Naive thymus-derived CD8-positive, alpha-beta T cell (primary cell): ENCODE measurements at regions of chr16 and their contacts with region 1.

Region 1: DNA sequence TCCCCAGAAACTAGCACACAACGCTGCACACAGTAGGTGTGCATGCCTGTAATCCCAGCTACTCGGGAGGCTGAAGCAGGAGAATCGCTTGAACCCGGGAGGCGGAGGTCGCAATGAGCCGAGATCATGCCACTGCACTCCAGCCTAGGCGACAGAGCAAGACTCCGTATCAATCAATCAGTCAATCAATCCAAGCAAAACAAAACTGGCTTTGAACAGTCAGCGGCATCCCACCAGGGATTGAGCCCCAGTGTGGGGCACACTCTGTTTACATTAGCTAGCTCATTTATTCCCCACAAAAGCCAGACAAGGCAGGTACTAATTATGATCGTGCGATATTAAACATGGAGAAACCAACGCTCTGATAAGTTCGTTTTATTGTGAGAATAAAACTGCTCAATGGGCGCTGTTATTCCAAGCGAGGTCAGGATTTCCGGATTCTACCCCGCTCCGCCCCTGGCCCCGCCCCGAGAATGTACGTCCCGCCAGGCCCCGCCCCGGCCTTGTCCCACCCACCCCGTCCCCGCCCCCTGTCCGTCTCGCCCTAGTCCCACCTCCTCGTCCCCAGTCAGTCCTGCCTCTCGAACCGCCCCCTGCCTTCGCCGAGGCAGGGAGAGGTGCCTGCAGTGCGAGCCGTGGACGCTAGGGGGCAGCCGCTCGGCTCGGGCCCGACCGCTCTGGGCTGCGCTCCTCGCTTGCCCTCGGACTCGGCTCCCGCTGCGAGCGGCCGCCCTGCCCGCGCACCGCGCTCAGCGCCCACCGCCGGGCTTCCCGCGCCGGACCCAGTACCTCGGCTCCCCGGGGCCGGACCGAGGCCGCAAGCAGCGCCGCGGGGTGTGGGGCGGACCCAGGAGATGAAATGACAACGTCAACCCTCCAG is at the start of gene VPS4A:
- DNase-seq: peak; percentile 94 to 98 (median 98)
- ATAC-seq: peak; percentile 92 to 95
- H3K4me3 Mint-ChIP-seq: peak within 1 kb of the TSS; percentile 90 to 100 (median 99)
- H3K27ac Mint-ChIP-seq: peak within 1 kb of the TSS; percentile 95 to 98 (median 96)
- H3K4me1 Mint-ChIP-seq: peaks cover 15 to 35% (median 32%) of the 10 kb centered on the region in 4 donors
- H3K27me3 Mint-ChIP-seq: no peaks in the 10 kb centered on the region
- polyA plus RNA-seq, gene VPS4A: 28.4 to 36.1 (median 29.1) TPM

Region 2: DNA sequence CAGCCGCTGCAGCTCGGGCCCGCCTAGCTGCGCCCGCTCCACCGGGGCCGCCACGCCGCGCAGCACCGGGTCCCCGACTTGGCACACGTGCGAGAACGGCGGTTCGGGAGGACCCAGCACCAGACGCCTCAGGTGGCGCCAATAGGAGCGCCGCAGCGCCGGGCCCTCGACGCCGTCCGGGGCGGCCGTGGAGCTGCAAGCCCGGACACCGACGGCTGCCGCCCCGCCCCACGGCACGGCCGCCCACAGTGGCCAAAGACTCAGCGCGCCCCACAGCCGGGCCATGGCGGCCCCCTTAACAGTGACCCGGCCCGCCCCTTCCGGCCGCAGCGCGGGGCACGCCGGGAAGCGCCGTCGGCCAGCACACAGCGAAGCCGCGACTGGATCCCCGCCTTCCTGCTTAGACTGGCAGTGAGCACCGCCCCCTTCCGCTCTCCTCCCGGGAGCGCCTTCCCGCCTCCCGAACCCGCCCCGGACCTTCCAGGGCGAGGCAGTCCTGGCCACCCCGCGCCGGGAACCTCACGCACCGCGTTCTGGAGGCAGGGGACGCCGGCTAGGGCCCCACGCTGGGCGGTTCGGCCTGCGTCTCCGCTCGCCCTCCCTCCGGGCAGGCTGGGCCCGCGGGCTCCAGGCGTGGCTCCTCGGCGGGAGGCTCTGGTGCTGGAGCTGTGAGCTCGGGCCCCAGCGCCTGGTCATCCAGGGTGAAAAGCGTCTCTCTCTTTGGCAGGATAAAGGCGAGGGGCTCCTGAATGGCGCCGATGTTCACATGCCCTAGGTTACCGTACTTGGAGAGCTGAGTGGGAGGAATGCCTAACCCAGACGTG is 19.6 kb after region 1 on chr16 and contains the start of gene PDF:
- POLR2A ChIA-PET with region 1: interaction called, 31 read pairs
- DNase-seq: peak; percentile 58 to 86 (median 77)
- ATAC-seq: peak; percentile 94 to 95
- H3K4me3 Mint-ChIP-seq: peak within 1 kb of the TSS; percentile 71 to 87 (median 78)
- H3K27ac Mint-ChIP-seq: peak within 1 kb of the TSS; percentile 37 to 87 (median 77)
- H3K4me1 Mint-ChIP-seq: peaks cover 9 to 61% (median 41%) of the 10 kb centered on the region in 4 donors
- H3K27me3 Mint-ChIP-seq: no peaks in the 10 kb centered on the region
- polyA plus RNA-seq, gene PDF: 12.3 to 17.2 (median 13.8) TPM

Region 3: GRCh38 chr16:69339289-69340108 is 28.6 kb after region 1 on chr16 and contains the starts of genes COG8 and NIP7:
- POLR2A ChIA-PET with region 1: interaction called, 17 read pairs
- DNase-seq: peak; percentile 73 to 95 (median 90)
- ATAC-seq: peak; percentile 84 to 89
- H3K4me3 Mint-ChIP-seq: peak within 1 kb of the TSS; percentile 98 to 100 (median 100)
- H3K27ac Mint-ChIP-seq: peak within 1 kb of the TSS; percentile 98 to 100 (median 99)
- H3K4me1 Mint-ChIP-seq: peaks cover 19 to 65% (median 53%) of the 10 kb centered on the region in 4 donors
- H3K27me3 Mint-ChIP-seq: no peaks in the 10 kb centered on the region
- polyA plus RNA-seq, gene COG8: 33.6 to 42.0 (median 39.6) TPM
- polyA plus RNA-seq, gene NIP7: 17.6 to 24.8 (median 18.5) TPM

Region 4: DNA sequence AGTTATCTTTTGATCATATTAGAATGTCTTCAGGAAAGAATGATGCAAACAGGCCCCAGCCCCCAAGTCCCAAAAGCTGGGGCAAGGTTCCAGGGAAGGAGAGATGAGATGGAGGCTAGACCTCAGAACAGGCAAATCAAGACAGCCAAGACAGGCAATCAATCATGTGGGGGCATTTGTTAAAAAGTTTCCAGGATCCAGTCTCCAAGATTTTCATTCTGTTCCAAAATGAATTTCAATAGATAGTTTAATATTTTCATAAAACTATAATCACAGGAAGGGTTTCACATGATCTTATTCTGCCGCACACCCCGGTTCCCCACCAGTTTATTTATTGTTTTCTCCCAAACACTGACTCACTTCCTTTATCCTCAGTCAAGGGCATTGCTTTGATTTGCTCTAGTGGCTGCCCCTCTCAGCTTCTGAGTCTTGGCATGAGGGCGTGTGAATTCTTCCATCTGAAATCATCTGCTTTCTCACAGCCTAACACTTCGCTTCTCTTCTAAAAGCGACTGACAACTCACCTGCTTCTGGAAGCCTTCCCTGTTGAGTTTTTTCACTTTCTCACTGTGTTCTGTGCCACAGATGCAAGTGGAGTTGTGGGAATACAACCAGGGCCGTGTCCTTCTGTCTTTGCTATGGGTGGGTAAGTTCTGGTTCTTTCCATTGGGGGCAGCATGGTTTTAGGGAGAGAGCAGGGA is 87.1 kb after region 1 on chr16:
- POLR2A ChIA-PET with region 1: no interaction called
- DNase-seq: no peak
- ATAC-seq: no peak
- H3K4me3 Mint-ChIP-seq: no peak overlapping the region
- H3K27ac Mint-ChIP-seq: peak overlapping the region in 1 of 10 donors; percentile 49
- H3K4me1 Mint-ChIP-seq: peaks cover 3 to 13% (median 6%) of the 10 kb centered on the region in 4 donors
- H3K27me3 Mint-ChIP-seq: peaks cover 0 to 3% (median 0%) of the 10 kb centered on the region in 5 donors

Region 5: DNA sequence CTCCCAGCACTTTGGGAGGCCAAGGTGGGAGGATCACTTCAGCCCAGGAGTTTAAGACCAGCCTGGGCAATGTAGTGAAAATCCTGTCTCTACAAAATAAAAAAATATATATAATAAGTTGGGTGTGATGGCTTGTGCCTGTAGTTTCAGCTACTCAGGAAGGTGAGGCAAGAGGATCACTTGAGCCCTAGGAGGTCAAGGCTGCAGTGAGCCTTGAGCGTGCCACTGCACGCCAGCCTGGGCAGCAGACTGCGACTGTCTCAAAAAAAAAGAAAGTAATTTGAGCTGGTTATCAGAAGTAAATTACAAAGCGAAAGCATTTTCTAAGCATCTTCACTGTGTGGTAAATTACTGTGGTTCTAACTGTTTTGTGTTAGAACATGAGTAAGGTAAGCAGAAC is 349.3 kb after region 1 on chr16:
- POLR2A ChIA-PET with region 1: no interaction called
- DNase-seq: no peak
- ATAC-seq: no peak
- H3K4me3 Mint-ChIP-seq: no peak overlapping the region
- H3K27ac Mint-ChIP-seq: no peak overlapping the region
- H3K4me1 Mint-ChIP-seq: no peaks in the 10 kb centered on the region
- H3K27me3 Mint-ChIP-seq: no peaks in the 10 kb centered on the region